ENCODE measurements at regions of chr10 and their contacts with region 1.

Region 1: DNA sequence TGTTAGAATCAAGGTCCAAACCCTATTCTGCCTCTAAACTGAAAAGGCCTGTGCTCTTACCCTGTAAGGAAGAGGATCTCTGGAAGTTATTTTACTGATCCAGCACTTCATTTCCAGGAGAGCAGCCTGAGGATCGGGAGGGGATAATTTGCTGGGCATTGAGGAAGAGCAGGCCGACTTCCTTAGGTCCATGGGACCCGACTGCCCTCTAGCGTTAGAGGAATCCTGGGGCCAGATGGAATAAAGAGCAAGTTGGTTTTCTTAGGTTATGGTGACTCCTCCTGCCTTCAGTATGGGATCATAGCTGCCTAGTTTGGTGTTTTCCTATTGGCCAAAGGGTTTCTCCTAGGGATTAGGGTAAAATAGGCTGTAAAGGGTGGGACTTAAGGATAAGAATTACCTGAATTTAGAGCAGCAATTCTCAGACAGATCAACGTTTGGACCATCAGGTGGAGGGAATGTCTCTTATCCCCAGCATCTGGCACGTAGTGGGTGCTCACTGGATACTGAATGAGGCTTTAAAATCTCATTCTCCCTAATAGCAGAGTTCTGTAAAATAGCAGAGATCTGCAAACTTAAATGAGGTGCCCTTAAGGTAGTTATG is 40.0 kb upstream of the SORBS1 start:
- DNase-seq: peak; percentile 66 to 85
- ATAC-seq: peak; percentile 80 to 93 (median 88)
- H3K4me3 ChIP-seq: no peak overlapping the region
- H3K27ac ChIP-seq: peak overlapping the region in 2 of 10 donors; percentile 15 to 22
- H3K4me1 ChIP-seq: peaks cover 0 to 27% (median 18%) of the 10 kb centered on the region in 9 donors
- H3K27me3 ChIP-seq: no peaks in the 10 kb centered on the region
- CTCF ChIP-seq: peak; percentile 87 to 99 (median 95)

Region 2: GRCh38 chr10:95384011-95384704 is 217.1 kb before region 1 on chr10:
- intact Hi-C with region 1: loop called in 1 of 10 experiments (anchors 5 kb)
- DNase-seq: no peak
- ATAC-seq: peak in 2 of 8 donors; percentile 9 to 46
- H3K4me3 ChIP-seq: no peak overlapping the region
- H3K27ac ChIP-seq: peak overlapping the region in 3 of 10 donors; percentile 14 to 57 (median 40)
- H3K4me1 ChIP-seq: peaks cover 4 to 69% (median 36%) of the 10 kb centered on the region in 9 donors
- H3K27me3 ChIP-seq: no peaks in the 10 kb centered on the region
- CTCF ChIP-seq: no peak

Region 3: GRCh38 chr10:95430231-95430951 is 170.8 kb before region 1 on chr10:
- intact Hi-C with region 1: loop called (anchors 1 to 5 kb)
- DNase-seq: peak in 1 of 2 donors; percentile 59
- ATAC-seq: peak; percentile 71 to 80 (median 77)
- H3K4me3 ChIP-seq: no peak overlapping the region
- H3K27ac ChIP-seq: peak overlapping the region in 8 of 10 donors; percentile 50 to 95 (median 80)
- H3K4me1 ChIP-seq: peaks cover 46 to 100% (median 92%) of the 10 kb centered on the region in 9 donors
- H3K27me3 ChIP-seq: no peaks in the 10 kb centered on the region
- CTCF ChIP-seq: peak; percentile 94 to 98 (median 97)

Region 4: GRCh38 chr10:95544783-95545500 is 56.3 kb before region 1 on chr10:
- intact Hi-C with region 1: no loop called
- DNase-seq: no peak
- ATAC-seq: peak in 4 of 8 donors; percentile 13 to 36 (median 18)
- H3K4me3 ChIP-seq: peak overlapping the region in 1 of 10 donors; percentile 3
- H3K27ac ChIP-seq: peak overlapping the region; percentile 61 to 92 (median 89)
- H3K4me1 ChIP-seq: peaks cover 24 to 100% (median 88%) of the 10 kb centered on the region in 9 donors
- H3K27me3 ChIP-seq: no peaks in the 10 kb centered on the region
- CTCF ChIP-seq: no peak